Naive thymus-derived CD4-positive, alpha-beta T cell (primary cell): ENCODE measurements at regions of chr16 and their contacts with region 1.

Region 1: GRCh38 chr16:28846080-28846932 is at the start of gene TUFM:
- DNase-seq: peak; percentile 88 to 99 (median 98)
- ATAC-seq: peak; percentile 98
- H3K4me3 ChIP-seq: peak within 1 kb of the TSS; percentile 88
- H3K4me3 Mint-ChIP-seq: peak within 1 kb of the TSS; percentile 91 to 98 (median 96)
- H3K27ac ChIP-seq: peak within 1 kb of the TSS; percentile 94
- H3K27ac Mint-ChIP-seq: peak within 1 kb of the TSS; percentile 91 to 98 (median 94)
- H3K4me1 ChIP-seq: peaks cover 19 to 25% of the 10 kb centered on the region in 2 donors
- H3K4me1 Mint-ChIP-seq: peaks cover 17 to 38% (median 27%) of the 10 kb centered on the region in 7 donors
- H3K27me3 ChIP-seq: no peaks in the 10 kb centered on the region
- H3K27me3 Mint-ChIP-seq: no peaks in the 10 kb centered on the region
- total RNA-seq, gene TUFM: 89.7 to 140 (median 95.2) TPM

Region 2: DNA sequence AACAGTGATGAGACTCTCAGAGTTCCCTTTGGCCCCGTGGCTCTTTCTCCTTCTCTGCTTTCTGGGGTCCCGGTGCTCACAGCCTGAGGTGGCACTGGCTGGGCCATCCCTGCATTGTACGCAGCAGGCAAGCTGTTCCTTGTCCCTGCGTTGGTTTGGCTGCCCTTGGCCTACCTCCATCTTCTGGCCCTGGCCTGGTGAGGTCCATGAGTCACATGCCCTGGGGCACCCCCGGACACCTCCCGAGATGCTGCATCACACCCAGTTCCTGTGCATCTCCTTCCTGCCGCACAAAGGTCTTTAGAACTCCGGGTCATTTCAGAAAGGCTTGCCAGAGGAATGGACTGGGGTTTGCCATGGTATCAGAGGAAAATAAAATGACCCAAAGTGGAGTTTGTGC is 258.9 kb before region 1 on chr16:
- CTCF ChIA-PET with region 1: no interaction called
- POLR2A ChIA-PET with region 1: no interaction called
- intact Hi-C with region 1: no loop called
- DNase-seq: no peak
- ATAC-seq: no peak
- H3K4me3 ChIP-seq: no peak overlapping the region
- H3K4me3 Mint-ChIP-seq: peak overlapping the region in 1 of 10 donors; percentile 16
- H3K27ac ChIP-seq: no peak overlapping the region
- H3K27ac Mint-ChIP-seq: peak overlapping the region in 2 of 9 donors; percentile 45
- H3K4me1 ChIP-seq: no peaks in the 10 kb centered on the region
- H3K4me1 Mint-ChIP-seq: no peaks in the 10 kb centered on the region
- H3K27me3 ChIP-seq: no peaks in the 10 kb centered on the region
- H3K27me3 Mint-ChIP-seq: no peaks in the 10 kb centered on the region

Region 3: GRCh38 chr16:28823872-28824716 is 22.2 kb before region 1 on chr16:
- CTCF ChIA-PET with region 1: interaction called, 3 read pairs
- POLR2A ChIA-PET with region 1: interaction called, 51 read pairs
- intact Hi-C with region 1: loop called (anchors 1 kb)
- DNase-seq: peak; percentile 92 to 97 (median 94)
- ATAC-seq: peak; percentile 82
- H3K4me3 ChIP-seq: peak overlapping the region; percentile 79
- H3K4me3 Mint-ChIP-seq: peak overlapping the region; percentile 92 to 99 (median 97)
- H3K27ac ChIP-seq: peak overlapping the region; percentile 94
- H3K27ac Mint-ChIP-seq: peak overlapping the region; percentile 96 to 100 (median 99)
- H3K4me1 ChIP-seq: peaks cover 19 to 20% of the 10 kb centered on the region in 2 donors
- H3K4me1 Mint-ChIP-seq: peaks cover 14 to 55% (median 52%) of the 10 kb centered on the region in 7 donors
- H3K27me3 ChIP-seq: no peaks in the 10 kb centered on the region
- H3K27me3 Mint-ChIP-seq: peaks cover 0 to 4% (median 0%) of the 10 kb centered on the region in 5 donors

Region 4: GRCh38 chr16:28863929-28864793 is 17.9 kb after region 1 on chr16:
- CTCF ChIA-PET with region 1: interaction called, 9 read pairs
- POLR2A ChIA-PET with region 1: interaction called, 79 read pairs
- intact Hi-C with region 1: loop called (anchors 1 kb)
- DNase-seq: peak in 4 of 9 donors; percentile 24 to 43 (median 30)
- ATAC-seq: no peak
- H3K4me3 ChIP-seq: peak overlapping the region; percentile 96
- H3K4me3 Mint-ChIP-seq: peak overlapping the region; percentile 97 to 100 (median 99)
- H3K27ac ChIP-seq: peak overlapping the region; percentile 85
- H3K27ac Mint-ChIP-seq: peak overlapping the region; percentile 95 to 99 (median 97)
- H3K4me1 ChIP-seq: peaks cover 7 to 11% of the 10 kb centered on the region in 2 donors
- H3K4me1 Mint-ChIP-seq: peaks cover 15 to 42% (median 29%) of the 10 kb centered on the region in 7 donors
- H3K27me3 ChIP-seq: no peaks in the 10 kb centered on the region
- H3K27me3 Mint-ChIP-seq: no peaks in the 10 kb centered on the region

Region 5: GRCh38 chr16:28943281-28943680 is 97.0 kb after region 1 on chr16:
- CTCF ChIA-PET with region 1: interaction called, 12 read pairs
- POLR2A ChIA-PET with region 1: no interaction called
- intact Hi-C with region 1: loop called (anchors 1 kb)
- DNase-seq: no peak
- ATAC-seq: no peak
- H3K4me3 ChIP-seq: no peak overlapping the region
- H3K4me3 Mint-ChIP-seq: no peak overlapping the region
- H3K27ac ChIP-seq: no peak overlapping the region
- H3K27ac Mint-ChIP-seq: no peak overlapping the region
- H3K4me1 ChIP-seq: peaks cover 0 to 8% of the 10 kb centered on the region in 2 donors
- H3K4me1 Mint-ChIP-seq: peaks cover 7 to 19% (median 8%) of the 10 kb centered on the region in 7 donors
- H3K27me3 ChIP-seq: no peaks in the 10 kb centered on the region
- H3K27me3 Mint-ChIP-seq: peaks cover 0 to 10% (median 0%) of the 10 kb centered on the region in 5 donors

Region 6: GRCh38 chr16:29230671-29231096 is 384.4 kb after region 1 on chr16:
- CTCF ChIA-PET with region 1: no interaction called
- POLR2A ChIA-PET with region 1: no interaction called
- intact Hi-C with region 1: no loop called
- DNase-seq: no peak
- ATAC-seq: no peak
- H3K4me3 ChIP-seq: no peak overlapping the region
- H3K4me3 Mint-ChIP-seq: no peak overlapping the region
- H3K27ac ChIP-seq: no peak overlapping the region
- H3K27ac Mint-ChIP-seq: peak overlapping the region in 1 of 9 donors; percentile 62
- H3K4me1 ChIP-seq: no peaks in the 10 kb centered on the region
- H3K4me1 Mint-ChIP-seq: peaks cover 7 to 19% (median 10%) of the 10 kb centered on the region in 7 donors
- H3K27me3 ChIP-seq: no peaks in the 10 kb centered on the region
- H3K27me3 Mint-ChIP-seq: no peaks in the 10 kb centered on the region